ENCODE measurements at regions of chr3 and their contacts with region 1.

Region 1: DNA sequence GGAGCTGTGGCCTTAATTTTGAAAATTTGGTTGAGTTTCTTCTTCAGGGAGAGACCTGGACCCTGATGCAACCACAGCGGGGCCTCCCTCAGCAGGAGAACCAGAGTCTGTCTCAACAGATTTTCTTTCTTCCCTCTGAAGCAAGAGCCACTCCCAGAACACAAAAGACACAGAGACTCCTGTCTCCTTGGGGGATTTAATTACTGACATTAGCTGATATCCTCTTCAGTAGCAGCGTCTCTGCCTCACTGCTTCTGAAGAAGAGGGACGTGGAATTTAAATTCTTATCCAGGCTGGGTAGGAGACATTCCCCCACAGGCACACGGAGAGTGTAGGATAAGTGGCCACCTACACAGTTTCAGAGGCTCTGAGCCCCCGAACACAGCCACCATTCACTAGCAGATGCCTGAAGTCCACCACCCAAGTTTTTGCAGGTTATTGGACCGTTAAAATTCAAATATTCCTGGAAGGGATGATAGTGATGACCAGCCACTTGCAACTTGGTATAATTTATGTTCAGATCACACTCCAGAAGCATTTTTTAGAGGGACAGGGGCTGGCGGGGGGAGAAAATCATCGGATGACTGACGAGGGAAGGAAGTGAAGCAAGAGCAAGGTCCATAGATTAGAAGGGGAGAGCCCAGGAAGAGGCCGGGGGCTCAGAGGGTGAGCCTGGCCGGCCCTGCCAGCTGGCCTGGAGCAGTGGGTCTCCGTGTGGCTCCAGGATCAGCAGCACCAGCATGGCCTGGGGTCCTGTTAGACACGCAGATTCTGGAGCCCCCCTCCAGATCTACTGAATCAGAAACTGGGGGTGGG is 109.7 kb downstream of the BDH1 start:
- DNase-seq: no peak
- H3K4me3 ChIP-seq: no peak overlapping the region
- H3K27ac ChIP-seq: no peak overlapping the region
- H3K4me1 ChIP-seq: no peaks in the 10 kb centered on the region
- H3K27me3 ChIP-seq: no peaks in the 10 kb centered on the region; the same call in 1 of the 2 replicates
- CTCF ChIP-seq: no peak
- EP300 ChIP-seq: no peak
- RAD21 ChIP-seq: no peak

Region 2: DNA sequence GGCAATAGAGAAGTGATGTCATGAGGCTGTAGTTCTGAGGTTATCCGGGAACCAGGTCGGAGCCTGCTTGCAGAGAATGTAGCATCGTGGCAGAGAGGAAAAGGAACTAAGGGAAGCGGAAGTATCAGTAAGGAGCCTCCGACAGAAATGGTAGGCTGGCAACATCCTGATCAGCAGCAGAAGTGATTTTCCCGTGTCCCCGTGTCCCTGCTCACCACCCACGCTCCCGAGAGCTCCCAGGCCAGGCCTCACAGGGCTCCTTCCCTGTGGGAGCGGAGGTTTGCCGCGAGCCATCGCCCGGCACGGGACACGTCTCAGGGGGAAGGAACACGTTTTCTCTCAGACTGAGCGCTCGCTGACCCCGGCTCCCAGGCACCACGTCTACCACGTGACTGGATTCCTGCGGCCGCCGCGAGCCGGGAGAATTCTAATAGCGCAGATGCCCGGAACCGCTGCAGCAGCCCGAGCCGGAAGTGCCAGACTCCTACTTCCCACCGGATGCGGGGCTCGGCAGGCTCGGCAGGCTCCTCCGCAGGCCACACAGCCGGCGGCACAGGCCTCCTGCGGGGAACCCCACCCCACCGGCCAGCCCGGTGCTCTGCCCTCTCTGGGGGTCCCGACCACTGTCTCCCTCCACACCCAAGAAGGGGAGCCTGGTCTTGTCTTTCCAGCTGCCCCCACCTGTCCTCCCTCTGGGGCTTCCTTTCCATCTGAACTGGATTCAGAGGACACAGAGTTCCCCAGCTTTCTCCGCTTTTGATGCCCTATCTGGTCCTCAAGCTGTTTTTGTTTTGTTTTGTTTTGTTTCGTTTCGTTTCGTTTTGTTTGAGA is 10.4 kb after region 1 on chr3:
- CTCF ChIA-PET with region 1: interaction called, 10 read pairs
- POLR2A ChIA-PET with region 1: no interaction called
- DNase-seq: no peak
- H3K4me3 ChIP-seq: no peak overlapping the region
- H3K27ac ChIP-seq: no peak overlapping the region
- H3K4me1 ChIP-seq: peaks cover 0 to 8% of the 10 kb centered on the region in 2 experiments; a peak in 1 of 4 replicates
- H3K27me3 ChIP-seq: no peaks in the 10 kb centered on the region
- CTCF ChIP-seq: no peak
- EP300 ChIP-seq: no peak
- RAD21 ChIP-seq: no peak